ENCODE measurements at regions of chr1 and their contacts with region 1.

Region 1: GRCh38 chr1:215793180-215793579 is 226.1 kb downstream of the KCTD3 start:
- DNase-seq: no peak
- ATAC-seq: no peak
- H3K4me3 ChIP-seq: no peak overlapping the region
- H3K27ac ChIP-seq: no peak overlapping the region
- H3K4me1 ChIP-seq: no peaks in the 10 kb centered on the region
- H3K27me3 ChIP-seq: no peaks in the 10 kb centered on the region
- CTCF ChIP-seq: peak in 6 of 12 donors; percentile 9 to 32 (median 16)
- POLR2A ChIP-seq: no peak

Region 2: GRCh38 chr1:215761446-215761845 is 31.7 kb before region 1 on chr1:
- intact Hi-C with region 1: no loop called
- DNase-seq: no peak
- ATAC-seq: no peak
- H3K4me3 ChIP-seq: no peak overlapping the region
- H3K27ac ChIP-seq: no peak overlapping the region
- H3K4me1 ChIP-seq: no peaks in the 10 kb centered on the region
- H3K27me3 ChIP-seq: no peaks in the 10 kb centered on the region
- CTCF ChIP-seq: no peak
- POLR2A ChIP-seq: no peak

Region 3: GRCh38 chr1:215923128-215923824 is 130.1 kb after region 1 on chr1:
- intact Hi-C with region 1: no loop called
- DNase-seq: no peak
- ATAC-seq: no peak
- H3K4me3 ChIP-seq: no peak overlapping the region
- H3K27ac ChIP-seq: no peak overlapping the region
- H3K4me1 ChIP-seq: no peaks in the 10 kb centered on the region
- H3K27me3 ChIP-seq: no peaks in the 10 kb centered on the region
- CTCF ChIP-seq: no peak
- POLR2A ChIP-seq: no peak

Region 4: GRCh38 chr1:216221260-216221700 is 428.1 kb after region 1 on chr1:
- intact Hi-C with region 1: loop called in 1 of 10 experiments (anchors 10 kb)
- DNase-seq: peak in 1 of 5 donors; percentile 15
- ATAC-seq: peak in 3 of 4 donors; percentile 53 to 88 (median 81)
- H3K4me3 ChIP-seq: peak overlapping the region in 10 of 12 donors; percentile 33 to 61 (median 46)
- H3K27ac ChIP-seq: no peak overlapping the region
- H3K4me1 ChIP-seq: peaks cover 0 to 9% (median 0%) of the 10 kb centered on the region in 12 donors
- H3K27me3 ChIP-seq: no peaks in the 10 kb centered on the region
- CTCF ChIP-seq: peak; percentile 31 to 72 (median 54)
- POLR2A ChIP-seq: no peak

Measured in heart left ventricle (tissue), 16 donors.